Psoas muscle (tissue), 8 donors: ENCODE measurements at regions of chr14 and their contacts with region 1.

Region 1: DNA sequence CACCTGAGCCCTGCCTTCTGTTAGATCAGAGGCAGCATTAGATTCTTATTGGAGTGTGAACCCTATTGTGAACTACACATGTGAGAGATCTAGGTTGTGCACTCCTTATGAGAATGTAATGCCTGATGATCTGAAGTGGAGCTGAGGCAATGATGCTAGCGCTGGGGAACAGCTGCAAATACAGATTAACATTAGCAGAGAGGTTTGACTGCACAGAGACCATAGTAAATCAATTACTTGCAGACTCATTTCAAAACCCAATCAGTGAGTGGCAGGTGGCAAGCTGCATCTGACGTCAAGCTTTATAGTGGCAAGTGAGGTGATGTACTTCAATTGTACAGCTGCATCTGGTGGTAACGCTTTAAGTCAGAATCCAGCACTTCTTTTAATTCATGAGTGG is 141.6 kb downstream of the GPHN start:
- DNase-seq: no peak
- ATAC-seq: no peak
- H3K4me3 ChIP-seq: no peak overlapping the region
- H3K27ac ChIP-seq: no peak overlapping the region
- H3K4me1 ChIP-seq: peaks cover 16% of the 10 kb centered on the region
- H3K27me3 ChIP-seq: no peaks in the 10 kb centered on the region
- CTCF ChIP-seq: no peak

Region 2: GRCh38 chr14:66143387-66144112 is 505.9 kb before region 1 on chr14:
- intact Hi-C with region 1: no loop called
- DNase-seq: no peak
- ATAC-seq: no peak
- H3K4me3 ChIP-seq: no peak overlapping the region
- H3K27ac ChIP-seq: no peak overlapping the region
- H3K4me1 ChIP-seq: no peaks in the 10 kb centered on the region
- H3K27me3 ChIP-seq: peaks cover 0 to 2% (median 1%) of the 10 kb centered on the region in 3 donors
- CTCF ChIP-seq: no peak

Region 3: GRCh38 chr14:66507722-66508546 is 141.6 kb before region 1 on chr14 and contains the start of gene GPHN:
- intact Hi-C with region 1: loop called in 1 of 2 experiments (anchors 10 kb)
- DNase-seq: peak; percentile 97 to 98
- ATAC-seq: peak; percentile 93 to 97 (median 95)
- H3K4me3 ChIP-seq: peak within 1 kb of the TSS; percentile 91
- H3K27ac ChIP-seq: peak within 1 kb of the TSS; percentile 95
- H3K4me1 ChIP-seq: peaks cover 37% of the 10 kb centered on the region
- H3K27me3 ChIP-seq: no peaks in the 10 kb centered on the region
- CTCF ChIP-seq: peak; percentile 38
- total RNA-seq, gene GPHN: 22.3 to 39.7 (median 32.1) TPM

Region 4: DNA sequence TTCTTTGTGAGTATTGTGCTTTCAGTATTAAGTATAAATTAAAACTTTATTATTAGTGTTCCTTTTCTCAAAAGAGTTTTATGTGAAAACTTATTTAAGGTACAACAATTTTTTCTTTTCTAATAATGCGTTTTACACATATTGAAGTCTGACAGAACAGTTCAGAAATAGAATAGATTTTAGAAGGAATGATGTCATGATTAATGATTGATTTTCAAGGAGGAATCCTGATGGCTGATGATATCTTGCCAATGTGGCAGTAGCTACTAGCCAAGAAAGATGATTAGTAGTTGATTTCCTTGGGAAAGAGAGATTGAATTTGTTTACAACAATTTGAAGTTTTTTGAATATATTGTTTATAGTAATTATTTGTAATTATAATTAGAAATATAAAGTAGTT is 31.7 kb after region 1 on chr14:
- intact Hi-C with region 1: no loop called
- DNase-seq: no peak
- ATAC-seq: no peak
- H3K4me3 ChIP-seq: no peak overlapping the region
- H3K27ac ChIP-seq: no peak overlapping the region
- H3K4me1 ChIP-seq: no peaks in the 10 kb centered on the region
- H3K27me3 ChIP-seq: no peaks in the 10 kb centered on the region
- CTCF ChIP-seq: no peak